PC-9 (cell line): ENCODE measurements at regions of chr4 and their contacts with region 1.

Region 1: DNA sequence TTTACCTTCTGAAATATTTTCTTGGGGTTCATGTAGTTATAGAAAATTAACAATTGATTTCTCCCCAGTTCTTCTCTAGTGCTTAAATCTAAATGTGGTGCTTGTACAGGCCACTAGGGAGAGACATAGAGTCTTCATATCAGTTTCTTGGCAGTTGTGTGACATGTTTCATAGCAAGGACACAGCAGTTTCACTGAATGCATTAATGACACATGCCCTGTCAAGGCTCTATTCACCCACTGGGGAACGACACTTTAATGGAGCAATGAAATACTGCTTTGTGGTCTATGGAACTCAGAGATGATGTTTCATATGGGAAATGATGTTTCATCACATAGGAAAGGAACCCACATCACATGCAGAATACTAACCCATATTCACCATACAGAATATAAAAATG is 2.8 kb downstream of the VEGFC start:
- DNase-seq: no peak
- H3K4me3 ChIP-seq: no peak overlapping the region
- H3K27ac ChIP-seq: no peak overlapping the region
- H3K4me1 ChIP-seq: peaks cover 17% of the 10 kb centered on the region
- H3K27me3 ChIP-seq: no peaks in the 10 kb centered on the region
- CTCF ChIP-seq: peak; percentile 67

Region 2: DNA sequence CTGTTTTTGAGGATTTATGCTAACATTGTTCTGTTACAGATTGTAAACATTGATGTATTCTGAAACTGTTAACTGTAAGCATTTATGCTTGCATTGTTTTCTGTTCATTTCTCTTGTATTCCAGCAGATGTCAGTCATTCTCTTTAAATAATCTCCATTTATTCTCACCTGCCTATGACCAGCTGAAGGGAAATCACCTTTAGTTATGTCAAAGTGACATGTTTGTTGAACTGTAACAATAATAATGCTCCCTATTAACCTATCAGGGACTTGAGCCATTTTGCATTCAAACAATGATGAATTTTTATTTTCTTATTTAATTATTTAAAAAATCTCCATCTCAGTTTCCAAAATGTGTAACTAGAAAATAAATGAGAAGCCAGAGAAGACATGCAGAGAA is 412.2 kb before region 1 on chr4:
- CTCF ChIA-PET with region 1: no interaction called
- POLR2A ChIA-PET with region 1: no interaction called
- intact Hi-C with region 1: loop called (anchors 2 kb)
- DNase-seq: no peak
- H3K4me3 ChIP-seq: no peak overlapping the region
- H3K27ac ChIP-seq: no peak overlapping the region
- H3K4me1 ChIP-seq: no peaks in the 10 kb centered on the region
- H3K27me3 ChIP-seq: no peaks in the 10 kb centered on the region
- CTCF ChIP-seq: peak; percentile 64

Region 3: DNA sequence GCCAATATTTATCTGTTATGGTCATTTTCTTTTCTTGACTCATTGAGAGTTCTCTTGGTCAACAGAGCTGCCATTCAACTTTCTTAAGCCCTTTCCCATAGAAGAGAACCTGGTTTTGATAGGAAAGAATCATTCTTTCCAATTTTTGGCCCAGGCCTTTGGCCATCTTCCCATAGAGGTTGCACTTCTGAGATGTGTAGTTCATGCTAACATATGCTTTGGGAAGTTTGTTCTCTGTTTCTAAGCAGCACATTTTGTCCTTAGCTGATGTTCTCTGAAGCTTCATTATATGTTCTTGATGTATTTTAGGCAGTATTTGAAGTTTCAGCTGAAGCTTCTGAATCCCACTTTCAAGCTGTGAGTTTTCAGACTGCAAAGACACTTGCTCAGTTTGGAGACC is 158.3 kb before region 1 on chr4:
- CTCF ChIA-PET with region 1: no interaction called
- POLR2A ChIA-PET with region 1: no interaction called
- intact Hi-C with region 1: no loop called
- DNase-seq: no peak
- H3K4me3 ChIP-seq: no peak overlapping the region
- H3K27ac ChIP-seq: no peak overlapping the region
- H3K4me1 ChIP-seq: peaks cover 7% of the 10 kb centered on the region
- H3K27me3 ChIP-seq: no peaks in the 10 kb centered on the region
- CTCF ChIP-seq: no peak

Region 4: DNA sequence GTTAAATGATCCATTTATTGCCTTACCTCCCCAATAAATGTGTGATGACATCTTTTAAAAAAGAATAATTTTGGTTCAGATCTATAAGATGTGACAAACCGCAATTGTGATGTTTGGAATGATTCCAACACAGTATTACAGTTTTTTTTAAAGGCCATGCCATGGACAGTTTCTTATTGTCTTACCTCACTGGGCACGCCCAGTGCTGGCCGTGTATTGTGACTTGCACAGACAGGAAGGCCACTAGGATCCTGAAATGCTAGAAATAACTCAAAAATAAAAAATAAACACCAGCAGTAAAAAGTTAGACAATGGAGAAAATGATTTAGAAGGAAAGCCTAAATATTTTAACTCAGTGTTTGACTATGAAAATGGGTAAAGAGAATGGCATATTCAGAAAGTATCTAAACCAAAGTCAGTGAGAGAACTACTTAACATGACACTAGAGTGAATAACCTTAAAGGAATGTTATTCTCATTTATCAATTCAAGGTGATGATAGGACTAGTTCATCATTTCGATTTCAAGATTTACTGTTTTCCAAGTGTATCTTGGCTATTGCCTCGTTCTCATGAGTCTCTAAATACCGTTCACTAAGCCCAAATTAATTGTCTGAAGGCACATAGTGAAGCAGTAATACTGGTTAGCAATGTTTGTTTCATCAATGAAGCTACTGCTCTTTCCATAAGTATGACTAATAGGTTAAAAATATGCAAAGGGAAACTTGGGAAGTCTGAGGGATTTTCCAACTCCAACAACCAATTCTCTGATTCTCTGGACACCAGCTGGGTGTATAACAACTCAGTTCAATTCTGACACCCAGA is 48.9 kb after region 1 on chr4:
- CTCF ChIA-PET with region 1: no interaction called
- POLR2A ChIA-PET with region 1: no interaction called
- intact Hi-C with region 1: loop called (anchors 2 kb)
- DNase-seq: no peak
- H3K4me3 ChIP-seq: no peak overlapping the region
- H3K27ac ChIP-seq: no peak overlapping the region
- H3K4me1 ChIP-seq: peaks cover 5% of the 10 kb centered on the region; the same call in 1 of the 2 replicates
- H3K27me3 ChIP-seq: no peaks in the 10 kb centered on the region
- CTCF ChIP-seq: no peak

Region 5: DNA sequence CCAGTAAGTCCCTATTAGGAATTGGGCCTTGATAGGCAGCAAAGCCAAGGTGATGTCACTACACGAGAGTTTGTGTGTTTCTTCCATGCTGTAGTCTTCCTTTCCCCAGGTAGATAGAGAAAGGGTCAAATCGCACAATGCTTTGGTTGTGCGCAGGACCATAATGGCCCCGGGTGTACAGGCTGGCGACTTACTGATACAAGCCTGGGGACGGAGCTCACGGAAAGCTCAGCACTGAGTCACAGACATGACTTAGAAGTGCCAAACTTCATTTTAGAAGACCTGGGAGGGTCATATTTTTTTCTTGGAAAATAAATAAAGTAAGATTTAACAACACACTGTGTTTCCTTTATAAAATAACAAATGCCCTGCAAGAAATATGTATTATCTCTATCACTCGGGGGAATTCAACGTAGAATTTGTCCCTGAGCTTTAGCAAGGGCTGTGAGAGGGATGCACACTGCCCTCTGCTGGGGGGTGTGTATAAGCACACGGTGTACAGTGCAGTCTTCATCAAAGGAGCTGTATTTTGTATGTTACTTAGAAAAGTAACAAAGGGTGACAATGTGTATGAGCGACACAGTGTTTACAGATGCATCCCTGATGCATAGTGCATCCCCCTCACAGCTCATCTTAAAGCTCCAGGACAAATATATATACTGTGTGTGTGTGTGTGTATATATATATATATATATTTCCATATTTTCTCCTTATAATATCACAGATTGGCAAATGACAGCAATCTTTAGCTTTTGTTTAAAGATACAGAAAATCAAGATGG is 257.3 kb after region 1 on chr4:
- CTCF ChIA-PET with region 1: interaction called, 9 read pairs
- POLR2A ChIA-PET with region 1: interaction called, 4 read pairs
- intact Hi-C with region 1: loop called (anchors 1 kb)
- DNase-seq: peak in 1 of 2 experiments; percentile 54
- H3K4me3 ChIP-seq: no peak overlapping the region
- H3K27ac ChIP-seq: no peak overlapping the region
- H3K4me1 ChIP-seq: no peaks in the 10 kb centered on the region
- H3K27me3 ChIP-seq: no peaks in the 10 kb centered on the region
- CTCF ChIP-seq: peak; percentile 85

Region 6: DNA sequence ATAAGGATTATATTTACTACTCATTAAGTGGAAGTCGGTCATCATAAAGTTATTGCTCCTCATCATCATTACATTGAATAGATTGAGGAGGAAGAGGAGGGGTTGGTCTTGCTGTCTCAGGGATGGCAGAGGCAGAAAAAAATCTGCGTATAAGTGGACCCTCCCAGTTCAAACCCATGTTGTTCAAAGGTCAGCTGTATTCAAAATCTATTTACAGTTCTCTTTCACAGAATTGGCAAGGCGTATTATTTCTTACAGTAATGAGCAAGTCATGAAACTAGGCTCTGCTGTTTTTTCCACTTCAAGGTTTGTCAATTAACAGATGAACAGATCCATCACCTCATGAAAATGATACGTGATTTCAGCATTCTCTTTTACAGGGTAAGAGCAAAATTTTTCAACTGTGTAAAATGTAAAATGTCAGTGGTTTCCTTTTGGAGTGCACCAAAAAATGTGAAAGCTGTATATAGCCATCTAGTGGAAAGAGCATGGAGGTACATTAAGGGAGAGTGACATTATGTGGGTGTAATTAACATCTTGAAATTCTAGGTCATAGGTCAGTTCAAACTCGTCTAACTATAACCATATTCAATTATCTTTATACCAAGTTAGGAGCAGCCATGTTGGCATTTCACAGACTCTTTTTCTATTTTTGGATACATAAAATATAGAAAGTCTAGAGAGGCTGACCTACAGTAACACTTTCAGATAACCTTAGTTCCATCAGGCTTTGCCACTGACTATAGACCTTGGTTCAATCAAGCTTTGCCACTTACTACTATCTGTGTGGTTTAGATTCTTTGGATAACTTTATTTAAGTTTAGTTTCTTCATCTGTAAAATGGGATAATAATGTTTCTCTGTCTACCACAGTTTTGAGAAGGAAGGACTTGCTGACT is 549.8 kb after region 1 on chr4:
- CTCF ChIA-PET with region 1: no interaction called
- POLR2A ChIA-PET with region 1: no interaction called
- intact Hi-C with region 1: loop called (anchors 10 kb)
- DNase-seq: peak in 1 of 2 experiments; percentile 37
- H3K4me3 ChIP-seq: no peak overlapping the region
- H3K27ac ChIP-seq: no peak overlapping the region
- H3K4me1 ChIP-seq: no peaks in the 10 kb centered on the region
- H3K27me3 ChIP-seq: no peaks in the 10 kb centered on the region
- CTCF ChIP-seq: peak; percentile 69